Activated naive CD4-positive, alpha-beta T cell treated with anti-CD3 and anti-CD28 coated beads, Interleukin-2, amount 10 ng/mL, durations not matched to agents 7 days and 5 days (primary cell): ENCODE measurements at regions of chr17 and their contacts with region 1.

Region 1: DNA sequence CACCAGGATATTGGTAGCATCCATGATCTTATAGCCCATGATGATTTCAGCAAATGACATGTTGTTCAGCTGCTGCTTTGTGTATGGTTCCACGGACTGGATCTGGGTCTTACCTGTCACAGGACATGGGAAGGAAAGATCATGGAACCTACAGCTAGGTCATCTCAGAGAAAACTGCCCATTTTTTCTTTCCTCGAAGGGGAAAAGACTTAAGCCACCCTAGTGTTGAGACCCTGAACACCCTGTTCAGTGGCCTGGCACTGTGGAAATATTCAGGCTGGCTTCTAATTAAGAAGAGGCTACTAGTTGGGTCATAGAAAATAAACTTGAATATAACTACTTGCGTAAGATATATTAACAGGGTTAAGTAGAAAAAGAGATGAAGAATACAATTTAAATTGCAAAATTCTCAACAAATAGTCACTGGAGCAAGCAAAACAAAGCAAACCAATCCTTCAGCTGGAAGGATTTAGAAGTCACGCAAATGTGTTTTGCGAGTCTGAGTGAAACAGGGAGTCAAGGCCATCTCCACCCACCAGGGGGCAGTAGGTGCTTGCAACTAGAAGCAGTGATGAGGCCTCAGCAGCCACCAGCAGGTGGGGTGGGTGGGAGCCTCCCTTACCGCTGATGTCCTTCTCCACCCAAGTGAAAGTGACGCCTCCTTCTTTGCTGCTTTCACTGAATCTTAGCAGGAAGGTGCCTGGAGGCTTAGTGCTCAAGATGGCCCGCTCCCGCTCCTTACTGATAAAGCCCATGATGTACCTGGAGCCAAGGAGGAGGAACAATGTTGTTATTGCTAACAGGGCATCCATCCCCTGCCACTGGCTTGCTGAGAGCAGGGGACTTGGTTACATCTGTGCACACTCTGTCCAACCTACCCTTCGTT is 34.3 kb downstream of the STAT5A start:
- DNase-seq: peak; percentile 98
- H3K4me3 Mint-ChIP-seq: no peak overlapping the region
- H3K27ac Mint-ChIP-seq: peak overlapping the region; percentile 78
- H3K4me1 Mint-ChIP-seq: peaks cover 51% of the 10 kb centered on the region
- H3K27me3 Mint-ChIP-seq: no peaks in the 10 kb centered on the region

Region 2: GRCh38 chr17:42107597-42108576 is 214.7 kb before region 1 on chr17:
- CTCF ChIA-PET with region 1: no interaction called
- DNase-seq: peak; percentile 95
- H3K4me3 Mint-ChIP-seq: peak overlapping the region; percentile 26
- H3K27ac Mint-ChIP-seq: peak overlapping the region; percentile 49
- H3K4me1 Mint-ChIP-seq: peaks cover 54% of the 10 kb centered on the region
- H3K27me3 Mint-ChIP-seq: no peaks in the 10 kb centered on the region

Region 3: DNA sequence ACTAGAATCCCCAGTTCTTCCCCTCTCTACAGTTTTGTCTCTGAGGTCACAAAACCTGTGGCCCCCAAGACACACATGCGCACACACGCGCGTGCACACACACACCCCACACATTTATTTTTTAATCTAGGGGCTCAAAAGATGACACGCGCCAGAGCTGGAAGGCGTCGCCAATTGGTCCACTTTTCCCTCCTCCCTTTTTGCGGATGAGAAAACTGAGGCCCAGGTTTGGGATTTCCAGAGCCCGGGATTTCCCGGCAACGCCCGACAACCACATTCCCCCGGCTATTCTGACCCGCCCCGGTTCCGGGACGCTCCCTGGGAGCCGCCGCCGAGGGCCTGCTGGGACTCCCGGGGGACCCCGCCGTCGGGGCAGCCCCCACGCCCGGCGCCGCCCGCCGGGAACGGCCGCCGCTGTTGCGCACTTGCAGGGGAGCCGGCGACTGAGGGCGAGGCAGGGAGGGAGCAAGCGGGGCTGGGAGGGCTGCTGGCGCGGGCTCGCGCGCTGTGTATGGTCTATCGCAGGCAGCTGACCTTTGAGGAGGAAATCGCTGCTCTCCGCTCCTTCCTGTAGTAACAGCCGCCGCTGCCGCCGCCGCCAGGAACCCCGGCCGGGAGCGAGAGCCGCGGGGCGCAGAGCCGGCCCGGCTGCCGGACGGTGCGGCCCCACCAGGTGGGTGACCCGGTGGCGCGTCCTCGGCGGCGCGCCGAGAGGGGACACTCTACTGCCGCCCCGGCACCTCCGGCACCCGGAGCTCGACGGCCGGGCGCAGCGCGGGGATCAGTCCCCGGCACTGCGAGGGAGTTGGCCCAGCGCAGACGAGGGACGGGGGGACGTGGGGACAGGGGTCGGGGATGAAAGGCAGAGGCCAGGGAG is 34.5 kb before region 1 on chr17 and contains the start of gene STAT5A:
- CTCF ChIA-PET with region 1: no interaction called
- DNase-seq: peak; percentile 90
- H3K4me3 Mint-ChIP-seq: peak within 1 kb of the TSS; percentile 97
- H3K27ac Mint-ChIP-seq: peak within 1 kb of the TSS; percentile 96
- H3K4me1 Mint-ChIP-seq: peaks cover 58% of the 10 kb centered on the region
- H3K27me3 Mint-ChIP-seq: no peaks in the 10 kb centered on the region

Region 4: GRCh38 chr17:42312285-42313130 is 10.1 kb before region 1 on chr17:
- CTCF ChIA-PET with region 1: interaction called, 20 read pairs
- DNase-seq: peak; percentile 85
- H3K4me3 Mint-ChIP-seq: peak overlapping the region; percentile 38
- H3K27ac Mint-ChIP-seq: peak overlapping the region; percentile 76
- H3K4me1 Mint-ChIP-seq: peaks cover 79% of the 10 kb centered on the region
- H3K27me3 Mint-ChIP-seq: no peaks in the 10 kb centered on the region

Region 5: DNA sequence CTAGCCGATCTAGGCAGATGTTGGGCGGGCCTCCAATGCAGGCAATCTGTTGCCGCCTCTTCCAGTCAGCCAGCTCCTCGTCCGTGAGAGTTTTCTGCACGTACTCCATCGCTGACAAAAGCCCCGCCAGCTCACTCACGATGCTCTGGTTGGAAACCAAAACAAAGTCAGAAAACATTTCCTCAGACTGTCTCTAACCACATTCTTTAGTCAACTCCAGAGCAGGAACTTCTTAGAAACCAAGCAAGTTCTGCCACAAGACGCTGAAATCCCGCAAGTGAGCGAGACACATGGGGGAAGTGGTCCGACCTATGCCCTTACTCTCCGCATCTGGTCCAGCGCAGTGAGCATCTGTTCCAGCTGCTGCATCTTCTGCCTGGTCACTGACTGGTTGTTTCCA is 14.8 kb after region 1 on chr17:
- CTCF ChIA-PET with region 1: interaction called, 13 read pairs
- DNase-seq: peak; percentile 84
- H3K4me3 Mint-ChIP-seq: peak overlapping the region; percentile 13
- H3K27ac Mint-ChIP-seq: peak overlapping the region; percentile 84
- H3K4me1 Mint-ChIP-seq: peaks cover 72% of the 10 kb centered on the region
- H3K27me3 Mint-ChIP-seq: no peaks in the 10 kb centered on the region

Region 6: GRCh38 chr17:42378597-42379594 is 56.3 kb after region 1 on chr17:
- CTCF ChIA-PET with region 1: no interaction called
- DNase-seq: no peak
- H3K4me3 Mint-ChIP-seq: peak overlapping the region; percentile 71
- H3K27ac Mint-ChIP-seq: peak overlapping the region; percentile 86
- H3K4me1 Mint-ChIP-seq: peaks cover 56% of the 10 kb centered on the region
- H3K27me3 Mint-ChIP-seq: no peaks in the 10 kb centered on the region

Region 7: GRCh38 chr17:42399948-42400843 is 77.6 kb after region 1 on chr17:
- CTCF ChIA-PET with region 1: interaction called, 237 read pairs
- DNase-seq: no peak
- H3K4me3 Mint-ChIP-seq: no peak overlapping the region
- H3K27ac Mint-ChIP-seq: no peak overlapping the region
- H3K4me1 Mint-ChIP-seq: peaks cover 19% of the 10 kb centered on the region
- H3K27me3 Mint-ChIP-seq: peaks cover 25% of the 10 kb centered on the region